ENCODE measurements at regions of chr2 and their contacts with region 1.

Region 1: GRCh38 chr2:237512774-237513466 is 25.9 kb downstream of the MLPH start:
- DNase-seq: peak; percentile 50 to 87 (median 71)
- ATAC-seq: peak; percentile 63 to 71 (median 71)
- H3K4me3 ChIP-seq: no peak overlapping the region
- H3K4me3 Mint-ChIP-seq: no peak overlapping the region
- H3K27ac ChIP-seq: no peak overlapping the region
- H3K27ac Mint-ChIP-seq: no peak overlapping the region
- H3K4me1 ChIP-seq: no peaks in the 10 kb centered on the region
- H3K4me1 Mint-ChIP-seq: no peaks in the 10 kb centered on the region
- H3K27me3 ChIP-seq: peaks cover 0 to 34% of the 10 kb centered on the region in 2 experiments
- H3K27me3 Mint-ChIP-seq: peaks cover 4 to 19% of the 10 kb centered on the region in 2 donors

Region 2: DNA sequence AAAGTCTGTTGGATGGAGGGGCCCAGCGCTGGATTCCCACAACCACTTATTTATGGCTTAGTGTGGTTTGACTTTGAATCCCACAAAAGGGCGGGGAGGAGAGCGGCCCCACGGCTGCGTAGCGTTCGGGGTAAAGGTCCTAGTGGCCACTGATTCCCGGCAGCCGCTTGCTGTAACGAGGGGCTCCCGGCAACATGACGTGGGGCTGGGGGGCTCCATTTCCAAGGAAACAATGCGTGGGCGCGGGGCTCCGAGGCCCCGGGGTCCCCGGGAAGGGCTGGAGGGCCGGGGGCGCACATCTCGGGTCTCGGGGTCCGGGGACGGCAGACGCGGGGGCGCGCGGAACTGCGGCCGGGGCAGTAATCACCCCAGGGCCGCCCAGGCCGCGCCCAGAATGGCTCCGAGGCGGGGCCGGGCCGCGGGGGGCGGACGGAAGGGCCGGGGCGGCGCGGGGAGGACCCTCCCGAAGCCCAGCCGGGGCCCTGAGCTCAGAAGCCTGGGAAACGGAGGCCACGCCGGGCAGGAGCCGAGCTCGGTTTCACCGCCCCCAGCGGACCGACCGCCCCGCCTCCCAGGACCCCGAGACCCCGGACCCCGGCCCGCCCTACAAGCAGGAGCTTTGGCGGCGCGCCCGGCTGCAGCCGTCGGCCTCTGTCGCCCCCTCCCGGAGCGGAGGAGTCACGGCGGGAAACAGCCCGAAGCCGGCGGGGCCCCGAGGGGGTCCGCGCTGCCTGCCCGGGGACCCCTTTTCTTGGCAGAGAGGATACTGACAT is 37.8 kb before region 1 on chr2:
- CTCF ChIA-PET with region 1: no interaction called
- POLR2A ChIA-PET with region 1: no interaction called
- DNase-seq: peak; percentile 27 to 82 (median 64)
- ATAC-seq: peak; percentile 83 to 89 (median 86)
- H3K4me3 ChIP-seq: peak overlapping the region; percentile 52 to 76
- H3K4me3 Mint-ChIP-seq: peak overlapping the region; percentile 81 to 89 (median 84)
- H3K27ac ChIP-seq: peak overlapping the region; percentile 42
- H3K27ac Mint-ChIP-seq: peak overlapping the region; percentile 76 to 82
- H3K4me1 ChIP-seq: peaks cover 3 to 26% of the 10 kb centered on the region in 2 experiments
- H3K4me1 Mint-ChIP-seq: peaks cover 11 to 15% (median 12%) of the 10 kb centered on the region in 3 donors
- H3K27me3 ChIP-seq: peaks cover 0 to 12% of the 10 kb centered on the region in 2 experiments
- H3K27me3 Mint-ChIP-seq: peaks cover 16 to 19% of the 10 kb centered on the region in 2 donors

Region 3: GRCh38 chr2:237486819-237487444 is 26.0 kb before region 1 on chr2 and contains the start of gene MLPH:
- CTCF ChIA-PET with region 1: no interaction called
- POLR2A ChIA-PET with region 1: no interaction called
- DNase-seq: no peak
- ATAC-seq: no peak
- H3K4me3 ChIP-seq: no peak within 1 kb of the TSS
- H3K4me3 Mint-ChIP-seq: no peak within 1 kb of the TSS
- H3K27ac ChIP-seq: no peak within 1 kb of the TSS
- H3K27ac Mint-ChIP-seq: no peak within 1 kb of the TSS
- H3K4me1 ChIP-seq: no peaks in the 10 kb centered on the region
- H3K4me1 Mint-ChIP-seq: peaks cover 0 to 2% (median 0%) of the 10 kb centered on the region in 3 donors
- H3K27me3 ChIP-seq: peaks cover 5 to 60% of the 10 kb centered on the region in 2 experiments
- H3K27me3 Mint-ChIP-seq: peaks cover 42 to 61% of the 10 kb centered on the region in 2 donors
- total RNA-seq, gene MLPH: 0.55 to 1.4 (median 0.72) TPM in 3 of 5 donors, not detected in the others

Region 4: DNA sequence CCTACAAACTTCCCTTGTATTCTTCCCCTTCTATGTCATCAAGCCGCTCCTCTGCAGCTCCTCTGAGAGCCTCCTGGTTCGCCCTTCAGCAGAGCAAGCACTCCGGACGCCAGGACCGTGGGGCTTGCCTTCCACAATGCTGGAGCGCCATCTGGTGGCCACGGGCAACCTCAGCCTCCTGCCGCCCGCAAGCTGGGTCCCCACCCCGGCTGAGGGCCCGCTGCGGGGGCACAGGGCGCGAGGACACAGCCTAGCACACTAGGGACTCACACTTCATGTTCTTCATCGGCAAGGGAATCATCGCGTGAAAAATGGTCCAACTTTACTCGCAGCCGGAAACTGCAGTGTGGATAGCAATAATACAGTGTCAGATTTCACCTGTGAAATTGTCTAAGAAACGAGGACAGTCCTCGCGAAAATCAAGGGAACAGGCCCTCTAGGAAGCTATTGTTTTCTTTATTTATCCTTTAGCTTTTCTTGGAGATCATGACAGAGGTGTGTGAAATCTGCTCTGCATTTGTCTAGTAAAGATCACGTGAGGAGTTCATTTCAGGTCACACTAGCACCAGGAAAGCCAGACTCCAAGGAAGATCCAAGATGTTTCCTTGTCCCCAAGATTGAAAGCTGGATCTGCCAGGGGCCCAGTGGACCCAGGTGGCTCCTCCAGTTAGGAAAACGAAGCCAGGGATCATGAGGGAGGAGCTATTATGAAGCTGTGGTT is 59.3 kb after region 1 on chr2:
- CTCF ChIA-PET with region 1: interaction called, 30 to 46 read pairs
- POLR2A ChIA-PET with region 1: no interaction called
- DNase-seq: peak; percentile 50 to 89 (median 79)
- ATAC-seq: peak; percentile 85 to 99 (median 90)
- H3K4me3 ChIP-seq: no peak overlapping the region
- H3K4me3 Mint-ChIP-seq: no peak overlapping the region
- H3K27ac ChIP-seq: no peak overlapping the region
- H3K27ac Mint-ChIP-seq: no peak overlapping the region
- H3K4me1 ChIP-seq: peaks cover 0 to 7% of the 10 kb centered on the region in 2 experiments
- H3K4me1 Mint-ChIP-seq: peaks cover 0 to 6% (median 0%) of the 10 kb centered on the region in 3 donors
- H3K27me3 ChIP-seq: peaks cover 0 to 28% of the 10 kb centered on the region in 2 experiments
- H3K27me3 Mint-ChIP-seq: peaks cover 0 to 10% of the 10 kb centered on the region in 2 donors

Region 5: GRCh38 chr2:237733677-237734300 is 220.9 kb after region 1 on chr2:
- CTCF ChIA-PET with region 1: interaction called, 3 to 12 read pairs
- POLR2A ChIA-PET with region 1: no interaction called
- DNase-seq: no peak
- ATAC-seq: no peak
- H3K4me3 ChIP-seq: no peak overlapping the region
- H3K4me3 Mint-ChIP-seq: no peak overlapping the region
- H3K27ac ChIP-seq: no peak overlapping the region
- H3K27ac Mint-ChIP-seq: peak overlapping the region in 1 of 2 donors; percentile 82
- H3K4me1 ChIP-seq: peaks cover 0 to 40% of the 10 kb centered on the region in 2 experiments
- H3K4me1 Mint-ChIP-seq: peaks cover 56 to 72% (median 62%) of the 10 kb centered on the region in 3 donors
- H3K27me3 ChIP-seq: no peaks in the 10 kb centered on the region
- H3K27me3 Mint-ChIP-seq: no peaks in the 10 kb centered on the region

Region 6: GRCh38 chr2:237931205-237931721 is 418.3 kb after region 1 on chr2:
- CTCF ChIA-PET with region 1: no interaction called
- POLR2A ChIA-PET with region 1: no interaction called
- DNase-seq: no peak
- ATAC-seq: no peak
- H3K4me3 ChIP-seq: no peak overlapping the region
- H3K4me3 Mint-ChIP-seq: no peak overlapping the region
- H3K27ac ChIP-seq: no peak overlapping the region
- H3K27ac Mint-ChIP-seq: no peak overlapping the region
- H3K4me1 ChIP-seq: peaks cover 0 to 3% of the 10 kb centered on the region in 2 experiments
- H3K4me1 Mint-ChIP-seq: peaks cover 1 to 14% (median 12%) of the 10 kb centered on the region in 3 donors
- H3K27me3 ChIP-seq: no peaks in the 10 kb centered on the region
- H3K27me3 Mint-ChIP-seq: peaks cover 0 to 4% of the 10 kb centered on the region in 2 donors

Region 7: DNA sequence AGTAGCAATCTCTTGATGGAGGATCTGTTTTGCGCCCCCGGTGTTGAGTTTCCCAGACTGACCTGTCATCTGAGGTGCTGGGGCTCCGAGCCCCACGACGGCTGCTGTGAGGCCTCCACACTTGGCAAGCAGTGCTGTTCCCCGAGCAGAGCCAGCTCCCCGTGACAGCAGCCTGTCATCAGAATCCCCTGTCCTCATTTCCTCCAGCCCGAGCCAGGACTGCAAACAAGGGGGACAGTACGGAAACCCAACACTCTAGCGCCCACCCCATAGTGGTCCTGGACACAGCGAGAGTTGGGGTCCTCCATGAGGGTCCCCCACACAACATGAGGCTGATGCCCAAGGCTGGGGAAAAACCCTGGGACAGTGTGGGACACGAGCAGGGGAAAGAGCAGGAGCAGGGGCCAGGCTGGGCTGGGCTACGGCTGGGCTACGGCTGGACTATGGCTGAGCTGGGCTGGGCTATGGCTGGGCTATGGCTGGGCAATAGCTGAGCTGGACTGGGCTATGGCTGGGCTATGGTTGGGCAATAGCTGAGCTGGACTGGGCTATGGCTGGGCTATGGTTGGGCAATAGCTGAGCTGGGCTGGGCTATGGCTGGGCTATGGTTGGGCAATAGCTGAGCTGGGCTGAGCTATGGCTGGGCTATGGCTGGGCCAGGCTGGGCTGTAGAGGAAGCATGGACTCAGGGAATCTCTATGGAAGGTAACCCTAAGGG is 624.1 kb after region 1 on chr2:
- CTCF ChIA-PET with region 1: interaction called in 1 of 2 experiments, 12 read pairs
- POLR2A ChIA-PET with region 1: no interaction called
- DNase-seq: no peak
- ATAC-seq: no peak
- H3K4me3 ChIP-seq: no peak overlapping the region
- H3K4me3 Mint-ChIP-seq: no peak overlapping the region
- H3K27ac ChIP-seq: no peak overlapping the region
- H3K27ac Mint-ChIP-seq: no peak overlapping the region
- H3K4me1 ChIP-seq: peaks cover 0 to 13% of the 10 kb centered on the region in 2 experiments
- H3K4me1 Mint-ChIP-seq: peaks cover 5 to 7% (median 7%) of the 10 kb centered on the region in 3 donors
- H3K27me3 ChIP-seq: peaks cover 0 to 4% of the 10 kb centered on the region in 2 experiments
- H3K27me3 Mint-ChIP-seq: no peaks in the 10 kb centered on the region